CD4-positive, alpha-beta memory T cell (primary cell): ENCODE measurements at regions of chr7 and their contacts with region 1.

Region 1: DNA sequence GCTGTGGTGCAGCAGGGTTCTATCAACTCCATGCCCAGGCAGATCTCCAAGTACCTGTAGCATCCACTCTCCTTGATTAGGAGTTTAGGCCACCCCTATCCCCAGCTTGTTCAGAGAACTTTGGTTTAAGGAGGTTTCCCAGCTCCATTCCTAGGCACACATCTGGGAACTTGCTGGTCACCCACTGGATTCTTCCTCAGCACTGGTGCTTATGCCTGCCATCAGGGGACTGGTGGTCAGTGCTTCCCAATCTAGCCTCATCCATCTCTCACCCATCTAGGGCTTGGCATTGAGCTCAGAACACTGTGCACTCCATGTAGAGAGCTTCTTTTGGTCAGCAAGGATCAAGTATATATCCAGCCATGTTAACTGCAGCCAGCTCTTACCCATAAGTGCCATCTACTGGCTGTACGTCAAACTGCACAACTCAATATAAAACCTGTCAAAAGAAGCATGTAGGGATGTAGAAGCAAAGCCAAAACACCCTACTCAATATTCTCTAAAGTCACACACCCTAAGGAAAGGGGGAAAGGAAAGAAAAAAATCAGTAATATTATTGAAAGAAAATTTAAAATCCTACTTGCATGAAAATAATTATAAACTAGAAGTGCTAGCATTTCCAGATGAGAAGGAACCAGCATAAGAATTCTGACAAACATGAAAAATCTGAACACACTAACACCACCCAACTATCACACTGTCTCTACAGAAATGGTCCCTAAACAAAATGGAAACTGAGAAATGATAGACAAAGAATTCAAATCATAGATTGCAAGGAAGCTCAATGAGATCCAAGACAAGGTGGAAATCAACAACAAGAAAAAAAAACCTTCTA is 531.2 kb upstream of the STEAP1 start:
- DNase-seq: peak in 2 of 5 donors; percentile 22 to 31
- H3K4me3 ChIP-seq: no peak overlapping the region
- H3K4me3 Mint-ChIP-seq: peak overlapping the region in 4 of 8 donors; percentile 40 to 72 (median 59)
- H3K27ac ChIP-seq: no peak overlapping the region
- H3K27ac Mint-ChIP-seq: peak overlapping the region in 2 of 7 donors; percentile 37 to 42
- H3K4me1 ChIP-seq: no peaks in the 10 kb centered on the region
- H3K4me1 Mint-ChIP-seq: peaks cover 9 to 19% (median 13%) of the 10 kb centered on the region in 4 donors
- H3K27me3 ChIP-seq: no peaks in the 10 kb centered on the region
- H3K27me3 Mint-ChIP-seq: no peaks in the 10 kb centered on the region

Region 2: DNA sequence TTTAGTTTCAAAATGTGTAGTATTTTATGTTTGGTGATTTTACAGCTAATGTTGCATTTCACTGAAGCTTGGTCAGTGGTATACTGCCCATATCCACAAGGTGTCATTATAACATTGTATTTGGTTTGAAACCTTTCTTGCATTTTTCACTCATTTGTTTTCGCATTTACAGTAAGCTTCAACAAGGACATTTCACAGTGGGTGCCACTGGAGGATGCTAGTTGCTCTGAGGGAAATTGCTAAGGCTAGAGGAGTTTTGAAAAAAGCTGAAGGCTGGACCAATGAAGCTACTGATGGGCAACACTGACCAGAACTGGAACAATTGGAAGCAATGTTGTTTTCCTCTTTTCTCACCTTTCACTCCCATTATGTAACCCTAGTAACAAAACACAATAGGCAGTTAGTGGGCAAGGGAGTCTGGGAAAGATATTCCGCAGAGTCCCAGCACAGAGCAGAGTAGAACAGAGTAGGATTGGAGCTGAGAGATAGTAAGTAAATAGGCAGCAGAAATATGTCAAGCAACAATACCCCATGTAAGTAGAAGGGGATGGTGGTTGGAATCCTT is 1379.6 kb before region 1 on chr7:
- CTCF ChIA-PET with region 1: no interaction called
- POLR2A ChIA-PET with region 1: no interaction called
- intact Hi-C with region 1: loop called (anchors 5 kb)
- DNase-seq: peak in 2 of 5 donors; percentile 7 to 12
- H3K4me3 ChIP-seq: no peak overlapping the region
- H3K4me3 Mint-ChIP-seq: no peak overlapping the region
- H3K27ac ChIP-seq: no peak overlapping the region
- H3K27ac Mint-ChIP-seq: no peak overlapping the region
- H3K4me1 ChIP-seq: no peaks in the 10 kb centered on the region
- H3K4me1 Mint-ChIP-seq: no peaks in the 10 kb centered on the region
- H3K27me3 ChIP-seq: no peaks in the 10 kb centered on the region
- H3K27me3 Mint-ChIP-seq: peaks cover 3 to 11% of the 10 kb centered on the region in 2 donors

Region 3: DNA sequence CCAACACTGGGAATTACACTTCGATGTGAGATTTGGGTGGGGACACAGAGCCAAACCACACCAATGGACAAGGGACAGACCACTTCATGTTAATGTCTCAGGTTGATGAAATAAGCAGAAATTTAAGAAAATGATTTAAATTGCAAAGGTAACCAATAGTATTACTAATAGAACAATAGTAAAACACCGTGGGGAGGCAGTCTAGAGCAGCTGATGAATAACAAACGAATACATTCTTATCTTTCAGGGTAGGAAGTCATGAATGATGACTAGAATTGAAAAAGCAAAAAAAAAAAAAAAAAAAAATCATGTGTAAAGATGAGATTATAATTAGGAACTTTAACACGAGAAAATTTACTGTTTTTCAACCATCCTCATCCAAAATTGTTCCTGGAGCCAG is 655.6 kb before region 1 on chr7:
- CTCF ChIA-PET with region 1: no interaction called
- POLR2A ChIA-PET with region 1: no interaction called
- intact Hi-C with region 1: loop called (anchors 10 kb)
- DNase-seq: no peak
- H3K4me3 ChIP-seq: no peak overlapping the region
- H3K4me3 Mint-ChIP-seq: no peak overlapping the region
- H3K27ac ChIP-seq: no peak overlapping the region
- H3K27ac Mint-ChIP-seq: no peak overlapping the region
- H3K4me1 ChIP-seq: no peaks in the 10 kb centered on the region
- H3K4me1 Mint-ChIP-seq: no peaks in the 10 kb centered on the region
- H3K27me3 ChIP-seq: no peaks in the 10 kb centered on the region
- H3K27me3 Mint-ChIP-seq: no peaks in the 10 kb centered on the region

Region 4: DNA sequence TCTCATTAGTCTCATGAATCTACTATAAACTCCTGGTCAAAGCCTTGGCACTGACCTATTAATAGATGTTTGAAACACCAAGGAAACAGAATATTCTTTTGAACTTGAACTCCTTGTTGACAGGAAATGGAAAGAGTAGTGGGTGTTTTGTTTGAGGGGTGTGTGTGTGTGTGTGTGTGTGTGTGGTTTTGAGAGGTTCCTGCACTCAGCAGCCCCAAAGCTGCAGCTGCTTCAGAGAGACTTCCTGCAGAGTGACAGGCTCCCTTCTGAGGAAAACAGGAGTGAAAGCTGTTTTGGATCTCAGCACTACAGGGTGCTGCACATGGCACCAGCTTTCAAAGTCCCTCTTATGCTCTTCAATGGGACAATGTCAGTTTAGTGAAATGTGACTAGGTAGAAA is 15.3 kb before region 1 on chr7:
- CTCF ChIA-PET with region 1: interaction called, 10 read pairs
- POLR2A ChIA-PET with region 1: no interaction called
- intact Hi-C with region 1: loop called (anchors 1 kb)
- DNase-seq: peak in 4 of 5 donors; percentile 16 to 44 (median 38)
- H3K4me3 ChIP-seq: no peak overlapping the region
- H3K4me3 Mint-ChIP-seq: peak overlapping the region in 6 of 8 donors; percentile 11 to 41 (median 18)
- H3K27ac ChIP-seq: no peak overlapping the region
- H3K27ac Mint-ChIP-seq: peak overlapping the region; percentile 12 to 76 (median 47)
- H3K4me1 ChIP-seq: peaks cover 10% of the 10 kb centered on the region
- H3K4me1 Mint-ChIP-seq: peaks cover 5 to 17% (median 15%) of the 10 kb centered on the region in 4 donors
- H3K27me3 ChIP-seq: no peaks in the 10 kb centered on the region
- H3K27me3 Mint-ChIP-seq: no peaks in the 10 kb centered on the region